ENCODE measurements at regions of chr1 and their contacts with region 1.

Region 1: DNA sequence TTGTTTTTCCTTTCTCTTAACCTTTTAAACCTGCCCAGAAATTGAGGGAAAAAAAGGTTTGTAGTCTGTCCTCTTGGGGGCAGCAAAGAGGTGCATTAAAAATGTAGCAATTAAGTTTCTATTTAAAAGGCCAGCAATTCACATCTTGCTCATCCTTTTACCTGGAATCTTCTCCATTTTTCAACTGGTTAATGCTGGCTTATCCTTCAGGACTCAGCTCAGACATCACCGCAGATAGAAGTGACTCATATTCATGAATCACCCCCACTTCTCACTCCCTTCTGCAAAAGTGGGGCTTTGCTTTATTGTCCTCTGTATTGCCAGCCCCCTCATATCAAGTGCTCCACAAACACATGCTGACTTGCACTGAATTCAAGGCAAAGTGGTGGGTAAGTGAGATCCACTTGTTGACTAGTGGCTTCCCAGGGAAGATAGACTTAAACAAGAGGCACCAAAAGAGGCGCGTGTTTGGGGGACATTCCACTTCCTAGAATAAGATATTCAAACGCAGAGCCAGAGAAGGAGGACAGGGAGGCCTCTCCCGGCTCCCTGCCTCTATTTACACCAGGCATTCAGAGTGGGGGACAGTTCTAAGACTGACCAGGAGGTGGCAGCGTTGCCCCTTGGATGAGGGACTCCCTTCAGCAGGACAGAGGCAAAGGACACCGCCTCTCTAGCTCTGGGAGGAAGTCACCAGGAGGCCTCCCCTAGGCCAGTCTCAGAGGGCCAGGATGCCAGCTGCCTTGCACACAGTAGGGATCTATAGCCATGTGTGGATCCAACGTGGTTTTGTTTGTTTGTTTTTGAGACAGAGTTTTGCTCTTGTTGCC is 23.2 kb upstream of the ZNF648 start:
- DNase-seq: peak; percentile 77
- H3K4me3 ChIP-seq: no peak overlapping the region
- H3K27ac ChIP-seq: no peak overlapping the region
- H3K4me1 ChIP-seq: peaks cover 22% of the 10 kb centered on the region
- H3K27me3 ChIP-seq: no peaks in the 10 kb centered on the region
- CTCF ChIP-seq: peak; percentile 64 to 83

Region 2: DNA sequence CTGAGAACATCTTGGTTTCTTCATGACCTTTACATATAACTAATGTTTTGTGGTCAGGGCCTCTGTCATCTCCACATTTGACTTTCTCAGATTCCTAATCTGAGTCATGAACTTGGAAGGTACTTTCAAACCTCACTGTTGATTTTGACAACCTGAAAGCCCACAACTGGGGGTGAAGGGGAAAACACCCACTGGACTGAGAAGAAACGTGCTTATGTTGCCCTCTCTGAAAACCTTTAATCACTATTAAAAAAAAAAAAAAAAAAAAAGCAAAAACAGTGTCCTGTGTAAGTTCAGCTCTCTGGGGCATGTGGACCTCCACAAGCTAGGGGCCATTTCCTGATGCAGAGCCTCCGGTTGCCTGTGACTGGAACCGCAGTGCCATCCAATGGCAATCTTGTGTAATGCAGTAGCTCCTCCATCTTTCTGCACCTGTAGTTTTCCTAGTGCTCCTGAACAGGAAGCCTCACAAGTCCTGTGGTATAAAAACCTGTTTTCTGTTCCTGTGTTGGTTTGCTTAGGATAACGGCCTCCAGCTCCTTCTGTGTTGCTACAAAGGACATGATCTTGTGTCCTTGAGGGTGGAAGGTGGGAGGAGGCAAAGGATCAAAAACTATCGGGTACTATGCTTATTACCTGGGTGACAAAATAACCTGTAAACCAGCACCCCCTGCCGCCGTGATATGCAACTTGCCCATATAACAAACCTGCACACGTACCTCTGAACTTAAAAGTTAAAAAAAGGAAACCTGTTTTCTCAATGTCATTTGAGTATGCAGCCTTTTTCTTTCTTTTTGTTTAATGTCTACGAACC is 147.7 kb before region 1 on chr1:
- CTCF ChIA-PET with region 1: interaction called, 26 read pairs
- dilution Hi-C with region 1: no loop called
- in situ Hi-C with region 1: no loop called
- intact Hi-C with region 1: no loop called
- DNase-seq: peak; percentile 63
- H3K4me3 ChIP-seq: no peak overlapping the region
- H3K27ac ChIP-seq: no peak overlapping the region
- H3K4me1 ChIP-seq: no peaks in the 10 kb centered on the region
- H3K27me3 ChIP-seq: peaks cover 2% of the 10 kb centered on the region
- CTCF ChIP-seq: peak; percentile 78 to 84

Region 3: GRCh38 chr1:182143154-182143657 is 58.5 kb after region 1 on chr1:
- CTCF ChIA-PET with region 1: interaction called, 10 read pairs
- dilution Hi-C with region 1: loop called (anchors 10 kb)
- in situ Hi-C with region 1: loop called in 1 of 2 experiments (anchors 10 kb)
- intact Hi-C with region 1: loop called (anchors 1 kb)
- DNase-seq: peak; percentile 73
- H3K4me3 ChIP-seq: no peak overlapping the region
- H3K27ac ChIP-seq: no peak overlapping the region
- H3K4me1 ChIP-seq: peaks cover 38% of the 10 kb centered on the region
- H3K27me3 ChIP-seq: no peaks in the 10 kb centered on the region
- CTCF ChIP-seq: peak; percentile 93 to 95

Region 4: GRCh38 chr1:182391362-182392044 is 306.8 kb after region 1 on chr1 and contains the start of gene GLUL:
- CTCF ChIA-PET with region 1: interaction called, 5 read pairs
- dilution Hi-C with region 1: loop called (anchors 5 kb)
- in situ Hi-C with region 1: loop called (anchors 5 kb)
- intact Hi-C with region 1: loop called (anchors 1 kb)
- DNase-seq: peak; percentile 88
- H3K4me3 ChIP-seq: peak within 1 kb of the TSS; percentile 75 to 95 (median 82)
- H3K27ac ChIP-seq: peak within 1 kb of the TSS; percentile 51
- H3K4me1 ChIP-seq: peaks cover 9% of the 10 kb centered on the region
- H3K27me3 ChIP-seq: no peaks in the 10 kb centered on the region
- CTCF ChIP-seq: peak in 1 of 2 donors; percentile 17
- total RNA-seq, gene GLUL: 400 to 471 TPM

Region 5: GRCh38 chr1:182588500-182589452 is 504.1 kb after region 1 on chr1 and contains the start of gene RNASEL:
- CTCF ChIA-PET with region 1: no interaction called
- dilution Hi-C with region 1: loop called (anchors 25 kb)
- in situ Hi-C with region 1: loop called (anchors 25 kb)
- intact Hi-C with region 1: no loop called
- DNase-seq: peak; percentile 75
- H3K4me3 ChIP-seq: peak within 1 kb of the TSS; percentile 69 to 77 (median 72)
- H3K27ac ChIP-seq: peak within 1 kb of the TSS; percentile 73
- H3K4me1 ChIP-seq: peaks cover 2% of the 10 kb centered on the region
- H3K27me3 ChIP-seq: no peaks in the 10 kb centered on the region
- CTCF ChIP-seq: no peak
- total RNA-seq, gene RNASEL: 3.0 to 3.5 TPM

Region 6: GRCh38 chr1:182789138-182790076 is 704.7 kb after region 1 on chr1 and contains the start of gene NPL:
- CTCF ChIA-PET with region 1: interaction called, 3 read pairs
- dilution Hi-C with region 1: loop called (anchors 10 kb)
- in situ Hi-C with region 1: loop called (anchors 10 to 25 kb)
- intact Hi-C with region 1: loop called (anchors 1 kb)
- DNase-seq: peak; percentile 75
- H3K4me3 ChIP-seq: peak within 1 kb of the TSS; percentile 67 to 79 (median 75)
- H3K27ac ChIP-seq: no peak within 1 kb of the TSS
- H3K4me1 ChIP-seq: peaks cover 12% of the 10 kb centered on the region
- H3K27me3 ChIP-seq: no peaks in the 10 kb centered on the region
- CTCF ChIP-seq: no peak
- total RNA-seq, gene NPL: 3.3 to 4.3 TPM